ENCODE measurements at regions of chr1 and their contacts with region 1.

Region 1: GRCh38 chr1:200669314-200670241 is at the start of gene DDX59:
- DNase-seq: peak; percentile 91
- ATAC-seq: peak; percentile 87
- H3K4me3 Mint-ChIP-seq: peak within 1 kb of the TSS; percentile 98
- H3K27ac Mint-ChIP-seq: peak within 1 kb of the TSS; percentile 94
- H3K4me1 Mint-ChIP-seq: peaks cover 44% of the 10 kb centered on the region
- H3K27me3 Mint-ChIP-seq: no peaks in the 10 kb centered on the region
- total RNA-seq, gene DDX59: 33.6 to 35.9 TPM

Region 2: DNA sequence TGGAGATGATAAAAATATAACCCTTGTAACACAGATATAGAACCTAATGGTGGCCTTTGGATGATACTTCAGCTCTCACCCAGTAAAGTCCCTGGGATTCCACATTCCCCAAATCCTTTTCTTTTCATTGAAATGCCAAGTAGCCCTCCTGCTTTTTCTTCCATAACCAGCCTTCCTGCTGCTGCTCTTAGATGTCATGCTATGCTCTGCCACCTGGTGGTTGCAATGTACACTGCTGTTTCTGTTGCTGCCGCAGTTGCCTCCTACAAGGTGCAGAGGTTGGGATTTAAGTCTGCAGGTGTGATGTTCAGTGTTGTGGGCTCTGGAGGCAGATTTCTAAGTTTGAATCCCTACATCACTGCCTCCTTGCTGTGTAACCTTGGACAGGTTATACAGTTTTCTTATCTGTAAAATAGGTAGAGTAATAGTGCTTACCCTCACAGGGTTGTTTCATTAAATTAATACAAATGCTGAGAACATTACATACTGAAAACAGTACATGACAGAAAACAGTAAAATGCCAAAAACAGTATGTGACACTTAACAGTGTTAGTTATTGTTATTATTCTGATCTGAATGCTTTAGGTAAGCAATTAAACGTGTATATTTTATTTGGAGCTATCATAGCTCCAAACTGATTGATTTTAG is 133.4 kb after region 1 on chr1:
- CTCF ChIA-PET with region 1: interaction called, 11 read pairs
- DNase-seq: peak; percentile 82
- ATAC-seq: peak; percentile 86
- H3K4me3 Mint-ChIP-seq: no peak overlapping the region
- H3K27ac Mint-ChIP-seq: no peak overlapping the region
- H3K4me1 Mint-ChIP-seq: no peaks in the 10 kb centered on the region
- H3K27me3 Mint-ChIP-seq: peaks cover 38% of the 10 kb centered on the region

Region 3: GRCh38 chr1:201170533-201171062 is 501.0 kb after region 1 on chr1:
- CTCF ChIA-PET with region 1: no interaction called
- DNase-seq: peak; percentile 85
- ATAC-seq: peak; percentile 96
- H3K4me3 Mint-ChIP-seq: peak overlapping the region; percentile 64
- H3K27ac Mint-ChIP-seq: peak overlapping the region; percentile 11
- H3K4me1 Mint-ChIP-seq: peaks cover 5% of the 10 kb centered on the region
- H3K27me3 Mint-ChIP-seq: peaks cover 43% of the 10 kb centered on the region

Measured in activated CD8-positive, alpha-beta memory T cell treated with anti-CD3 and anti-CD28 coated beads, Interleukin-2, amount 10 ng/mL, durations not matched to agents 7 days and 5 days (primary cell).